ENCODE measurements at regions of chr11 and their contacts with region 1.

Region 1: GRCh38 chr11:119181677-119182412 is 3.4 kb upstream of the NHERF4 start:
- DNase-seq: no peak
- H3K4me3 Mint-ChIP-seq: no peak overlapping the region
- H3K27ac Mint-ChIP-seq: no peak overlapping the region
- H3K4me1 Mint-ChIP-seq: peaks cover 22% of the 10 kb centered on the region
- H3K27me3 Mint-ChIP-seq: peaks cover 12% of the 10 kb centered on the region

Region 2: DNA sequence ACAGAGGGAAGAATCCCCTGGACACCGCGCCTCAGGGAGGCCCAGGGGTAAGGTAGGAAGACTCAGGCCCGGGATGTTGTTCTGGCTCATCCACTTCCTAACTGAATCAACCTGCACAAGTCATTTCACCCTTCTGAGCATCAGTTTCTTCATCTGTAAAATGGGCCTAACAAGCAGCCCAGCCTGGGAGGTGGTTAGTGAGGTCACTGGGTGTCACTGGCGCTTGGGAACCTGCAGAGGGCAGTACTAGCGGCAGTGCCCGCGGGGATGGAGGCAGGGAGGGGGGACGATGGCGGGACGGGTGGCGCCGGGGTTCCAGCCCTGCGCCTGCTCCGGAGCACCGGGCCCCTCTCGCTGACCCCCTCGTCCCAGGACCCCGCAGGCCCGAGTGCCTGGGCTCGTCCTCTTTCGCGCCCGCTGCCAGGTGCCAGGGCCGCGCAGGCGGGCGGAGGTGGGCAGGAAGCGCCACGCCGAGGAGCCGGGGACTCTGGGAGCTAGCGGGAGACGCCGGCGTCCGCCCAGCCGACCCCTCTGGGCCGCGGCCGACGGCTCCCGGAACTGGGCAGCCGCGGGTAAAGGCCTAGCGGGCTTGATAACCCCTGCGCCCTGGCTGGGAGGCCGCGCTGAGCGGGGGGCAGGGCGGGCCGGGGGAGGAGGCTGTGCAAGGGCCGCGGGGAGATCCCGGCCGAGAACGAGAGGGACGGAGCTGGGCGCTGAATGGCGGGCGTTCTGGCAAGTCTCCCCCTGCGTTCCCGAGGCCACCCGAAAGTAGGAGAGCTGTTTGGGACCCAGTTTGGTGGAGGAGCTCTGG is 13.2 kb before region 1 on chr11 and contains the start of gene NLRX1:
- CTCF ChIA-PET with region 1: interaction called, 14 read pairs
- DNase-seq: peak; percentile 89
- H3K4me3 Mint-ChIP-seq: peak within 1 kb of the TSS; percentile 89
- H3K27ac Mint-ChIP-seq: peak within 1 kb of the TSS; percentile 93
- H3K4me1 Mint-ChIP-seq: peaks cover 27% of the 10 kb centered on the region
- H3K27me3 Mint-ChIP-seq: peaks cover under 1% of the 10 kb centered on the region

Measured in activated naive CD4-positive, alpha-beta T cell treated with anti-CD3 and anti-CD28 coated beads, Interleukin-2, amount 10 ng/mL, durations not matched to agents 7 days and 5 days (primary cell).